PC-3 (cell line): ENCODE measurements at regions of chr18 and their contacts with region 1.

Region 1: GRCh38 chr18:59885579-59886163 is 14.1 kb upstream of the PMAIP1 start:
- DNase-seq: peak; percentile 81
- ATAC-seq: peak; percentile 64
- H3K4me3 ChIP-seq: peak overlapping the region; percentile 51
- H3K27ac ChIP-seq: peak overlapping the region; percentile 95
- H3K4me1 ChIP-seq: peaks cover 34% of the 10 kb centered on the region
- H3K27me3 ChIP-seq: no peaks in the 10 kb centered on the region
- CTCF ChIP-seq: no peak

Region 2: GRCh38 chr18:59837586-59837985 is 48.1 kb before region 1 on chr18:
- CTCF ChIA-PET with region 1: interaction called, 5 read pairs
- POLR2A ChIA-PET with region 1: interaction called, 4 read pairs
- intact Hi-C with region 1: loop called (anchors 1 kb)
- DNase-seq: peak; percentile 88
- ATAC-seq: peak; percentile 87
- H3K4me3 ChIP-seq: no peak overlapping the region
- H3K27ac ChIP-seq: no peak overlapping the region
- H3K4me1 ChIP-seq: no peaks in the 10 kb centered on the region
- H3K27me3 ChIP-seq: no peaks in the 10 kb centered on the region
- CTCF ChIP-seq: peak; percentile 96

Region 3: GRCh38 chr18:59966913-59967312 is 81.2 kb after region 1 on chr18:
- CTCF ChIA-PET with region 1: no interaction called
- POLR2A ChIA-PET with region 1: interaction called, 15 read pairs
- intact Hi-C with region 1: no loop called
- DNase-seq: no peak
- ATAC-seq: no peak
- H3K4me3 ChIP-seq: no peak overlapping the region
- H3K27ac ChIP-seq: no peak overlapping the region
- H3K4me1 ChIP-seq: no peaks in the 10 kb centered on the region
- H3K27me3 ChIP-seq: no peaks in the 10 kb centered on the region
- CTCF ChIP-seq: no peak

Region 4: DNA sequence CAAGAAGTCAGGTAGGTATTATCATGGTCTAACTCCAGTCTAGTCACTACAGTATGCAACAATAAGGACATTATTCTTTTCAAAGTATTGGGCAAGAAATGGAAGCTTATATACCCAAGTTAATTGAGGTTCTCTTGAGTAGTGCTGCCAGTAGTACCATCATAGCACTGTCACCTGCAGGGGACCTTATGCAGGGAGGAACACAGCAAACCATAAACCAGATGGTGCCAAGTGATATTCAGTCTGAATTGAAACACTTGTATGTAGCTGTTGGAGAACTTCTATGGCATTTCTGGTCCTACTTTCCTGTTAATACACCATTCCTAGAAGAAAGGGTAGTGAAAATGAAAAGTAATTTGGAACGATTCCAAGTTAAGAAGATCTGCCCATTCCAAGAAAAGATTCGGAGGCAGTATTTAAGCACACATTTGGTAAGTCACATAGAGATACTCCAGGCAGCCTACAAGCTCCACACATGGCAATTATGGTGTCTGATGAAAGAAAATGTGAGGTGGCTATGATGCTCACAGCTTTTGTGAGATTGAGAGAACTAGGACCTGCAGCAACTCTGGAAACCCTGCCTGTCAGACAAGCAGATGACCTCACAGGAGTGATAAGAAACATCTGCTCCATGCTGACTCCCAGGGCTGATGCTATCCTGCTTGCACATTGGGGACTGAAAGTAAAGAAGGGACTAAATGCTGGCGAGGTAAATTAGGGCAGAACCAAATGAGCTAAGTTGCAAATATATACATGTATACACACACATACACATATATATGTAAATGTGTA is 312.2 kb after region 1 on chr18:
- CTCF ChIA-PET with region 1: no interaction called
- POLR2A ChIA-PET with region 1: no interaction called
- intact Hi-C with region 1: no loop called
- DNase-seq: no peak
- ATAC-seq: no peak
- H3K4me3 ChIP-seq: no peak overlapping the region
- H3K27ac ChIP-seq: no peak overlapping the region
- H3K4me1 ChIP-seq: no peaks in the 10 kb centered on the region
- H3K27me3 ChIP-seq: no peaks in the 10 kb centered on the region
- CTCF ChIP-seq: no peak